Mammary epithelial cell (primary cell): ENCODE measurements at regions of chr14 and their contacts with region 1.

Region 1: DNA sequence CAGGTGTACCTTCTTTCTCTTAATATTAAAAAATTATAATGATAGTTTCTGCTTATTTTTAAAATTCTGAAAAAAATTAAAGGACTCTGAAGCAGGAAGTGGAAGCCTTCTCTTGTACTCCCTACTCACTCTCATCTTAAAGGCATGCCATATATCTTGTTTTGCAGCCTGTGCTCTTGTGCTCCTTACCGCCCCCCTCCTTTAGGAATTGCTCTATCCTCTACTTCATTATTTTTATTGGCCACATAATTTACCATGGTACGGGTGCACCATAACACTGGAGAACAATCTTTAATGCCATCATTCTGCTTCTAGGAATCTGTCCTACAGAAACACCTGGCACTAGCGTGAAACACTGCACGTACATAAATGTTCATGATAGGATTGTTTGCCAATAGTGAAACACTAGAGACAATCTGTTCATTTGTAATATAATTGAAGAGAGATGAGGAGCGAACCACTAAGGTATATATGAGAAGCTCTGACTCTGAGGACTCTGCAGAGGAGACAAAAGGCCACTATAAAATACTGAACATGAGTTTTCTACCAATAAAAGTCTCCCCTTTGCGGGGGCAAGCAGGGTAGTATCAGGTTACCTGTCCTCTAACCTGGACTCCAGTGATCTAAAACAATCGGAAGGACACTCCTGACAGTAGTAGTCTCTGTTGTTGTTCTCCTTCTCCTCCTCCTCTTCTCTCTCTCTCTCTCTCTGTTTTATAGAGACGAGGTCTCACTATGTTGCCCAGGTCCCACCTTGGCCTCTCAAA is 6.3 kb upstream of the NYNRIN start:
- DNase-seq: peak; percentile 73
- H3K4me3 ChIP-seq: no peak overlapping the region
- H3K27ac ChIP-seq: peak overlapping the region; percentile 67
- H3K4me1 ChIP-seq: peaks cover 28% of the 10 kb centered on the region
- H3K27me3 ChIP-seq: no peaks in the 10 kb centered on the region
- CTCF ChIP-seq: peak; percentile 28 to 47

Region 2: GRCh38 chr14:24351517-24351916 is 41.0 kb before region 1 on chr14:
- CTCF ChIA-PET with region 1: no interaction called
- dilution Hi-C with region 1: no loop called
- in situ Hi-C with region 1: no loop called
- intact Hi-C with region 1: loop called (anchors 1 kb)
- DNase-seq: peak; percentile 43
- H3K4me3 ChIP-seq: no peak overlapping the region
- H3K27ac ChIP-seq: no peak overlapping the region
- H3K4me1 ChIP-seq: peaks cover 2% of the 10 kb centered on the region
- H3K27me3 ChIP-seq: no peaks in the 10 kb centered on the region
- CTCF ChIP-seq: no peak

Region 3: DNA sequence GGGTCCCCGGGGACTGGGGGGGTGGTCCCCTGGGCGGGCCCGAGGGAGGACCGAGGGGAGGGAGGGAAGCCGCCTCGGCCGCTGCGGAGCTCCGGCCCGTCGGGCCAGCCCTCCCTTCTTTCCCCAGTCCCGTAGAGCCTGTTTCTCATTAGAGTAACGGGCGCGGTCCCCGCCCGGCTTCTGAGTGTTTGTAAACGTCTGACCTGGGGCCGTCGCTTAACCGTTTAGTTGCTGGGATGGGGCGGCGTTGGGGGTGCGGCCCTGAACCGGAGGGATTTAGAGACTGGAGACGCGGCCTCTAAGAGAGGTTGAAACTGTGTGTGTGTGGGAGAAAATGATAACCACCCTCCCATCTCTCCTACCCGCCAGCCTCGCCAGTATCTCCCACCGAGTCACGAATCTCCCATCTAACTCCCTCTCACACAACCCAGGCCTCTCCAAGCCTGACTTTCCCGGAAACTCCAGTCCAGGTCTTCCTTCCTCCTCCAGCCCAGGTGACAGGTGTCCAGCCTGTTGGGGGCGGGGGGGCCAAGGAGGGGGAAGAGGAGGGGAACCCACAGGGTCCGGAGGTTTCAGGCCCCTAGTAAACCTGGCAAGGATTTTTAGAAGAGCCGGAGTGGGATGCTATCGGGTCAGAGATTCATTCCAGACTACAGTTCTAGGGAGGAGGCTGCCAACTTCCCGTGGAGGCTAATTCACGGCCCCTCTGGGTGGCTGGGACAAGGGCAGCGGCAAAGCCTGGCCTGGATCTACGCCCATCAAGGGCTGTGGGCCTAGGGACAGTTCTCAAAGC is 25.6 kb before region 1 on chr14:
- CTCF ChIA-PET with region 1: interaction called, 3 read pairs
- dilution Hi-C with region 1: no loop called
- in situ Hi-C with region 1: no loop called
- intact Hi-C with region 1: loop called (anchors 1 kb)
- DNase-seq: peak; percentile 75
- H3K4me3 ChIP-seq: peak overlapping the region; percentile 45 to 56 (median 46)
- H3K27ac ChIP-seq: no peak overlapping the region
- H3K4me1 ChIP-seq: peaks cover 27% of the 10 kb centered on the region
- H3K27me3 ChIP-seq: no peaks in the 10 kb centered on the region
- CTCF ChIP-seq: no peak

Region 4: DNA sequence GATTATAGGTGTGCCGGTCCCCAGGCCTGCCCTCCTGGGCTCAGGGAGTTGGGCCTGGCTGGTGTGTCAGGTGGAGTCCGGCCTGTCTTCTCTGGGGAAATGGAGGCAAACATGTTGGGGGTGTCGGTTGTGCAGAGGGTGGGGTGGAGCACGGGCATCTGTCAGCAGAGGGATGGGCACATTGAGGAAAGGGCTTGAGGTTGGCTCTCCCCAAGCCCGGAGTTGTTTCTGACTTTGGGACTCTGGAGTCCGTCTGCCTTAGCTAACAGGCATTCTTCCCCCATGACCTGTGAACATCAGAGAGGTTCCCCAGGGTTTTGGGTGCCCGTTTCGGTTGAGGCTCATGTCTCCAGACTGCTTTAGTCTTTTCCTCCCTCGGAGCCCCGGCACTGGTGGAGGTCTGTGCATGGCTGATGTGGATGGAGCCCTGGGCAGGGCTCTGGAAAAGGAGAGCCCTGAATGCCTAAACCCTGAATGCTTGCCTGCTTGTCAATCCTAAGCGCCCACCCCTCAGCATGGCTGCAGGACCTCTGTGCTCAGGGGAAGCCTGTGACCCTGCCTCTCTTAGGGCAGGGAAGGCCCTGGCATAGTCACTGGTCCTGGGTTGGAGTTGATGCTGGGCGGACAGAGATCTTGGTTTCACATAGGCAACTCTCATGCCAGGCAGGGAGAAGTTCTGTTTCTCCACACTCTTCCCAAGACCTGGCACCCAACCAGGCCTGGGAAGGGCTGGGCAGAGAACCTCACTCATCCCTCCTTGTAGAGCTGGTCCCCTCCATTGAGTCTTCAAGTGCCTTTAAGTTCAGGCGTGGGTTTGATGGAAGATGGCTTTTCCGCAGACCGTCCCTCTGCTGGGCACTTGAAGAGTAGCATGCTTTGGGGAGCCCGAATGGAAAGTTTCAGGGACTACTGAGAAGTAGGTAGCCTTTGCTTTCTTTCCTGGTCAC is 19.2 kb after region 1 on chr14:
- CTCF ChIA-PET with region 1: no interaction called
- dilution Hi-C with region 1: no loop called
- in situ Hi-C with region 1: no loop called
- intact Hi-C with region 1: loop called (anchors 1 kb)
- DNase-seq: no peak
- H3K4me3 ChIP-seq: no peak overlapping the region
- H3K27ac ChIP-seq: no peak overlapping the region
- H3K4me1 ChIP-seq: no peaks in the 10 kb centered on the region
- H3K27me3 ChIP-seq: no peaks in the 10 kb centered on the region
- CTCF ChIP-seq: peak; percentile 65 to 74